ENCODE measurements at regions of chr13 and their contacts with region 1.

Region 1: DNA sequence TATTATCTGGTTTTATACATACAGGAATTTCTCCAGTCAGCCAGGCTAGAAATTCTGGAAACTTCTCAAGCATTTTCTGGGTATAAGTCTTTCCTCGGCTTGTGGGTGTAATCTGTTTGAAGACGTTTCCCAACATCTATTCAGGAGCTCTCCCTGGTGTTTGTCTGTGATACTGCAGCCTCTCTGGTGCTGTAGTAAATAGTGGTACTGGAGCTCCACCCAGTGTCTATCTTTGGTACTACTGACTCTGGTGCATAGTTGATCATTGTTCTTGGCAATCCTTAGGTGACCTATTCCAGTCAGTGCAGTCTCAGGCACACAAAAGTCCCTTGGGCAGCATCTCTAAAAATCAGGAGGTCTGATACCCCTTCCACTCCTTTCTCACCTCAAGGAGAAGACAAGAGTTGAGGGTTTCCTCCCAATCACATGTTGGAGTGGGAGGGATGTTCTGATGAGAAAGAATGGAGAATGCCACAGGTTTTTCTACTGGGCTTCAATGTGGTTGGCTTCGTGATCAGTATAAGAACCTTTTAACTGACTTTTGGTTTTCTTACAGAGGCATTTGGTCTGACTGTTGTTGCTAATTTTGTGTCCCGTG is 115.5 kb downstream of the CYSLTR2 start:
- DNase-seq: peak; percentile 89
- ATAC-seq: peak; percentile 96
- H3K4me3 Mint-ChIP-seq: no peak overlapping the region
- H3K27ac Mint-ChIP-seq: no peak overlapping the region
- H3K4me1 Mint-ChIP-seq: peaks cover 19% of the 10 kb centered on the region
- H3K27me3 Mint-ChIP-seq: peaks cover 22% of the 10 kb centered on the region

Region 2: DNA sequence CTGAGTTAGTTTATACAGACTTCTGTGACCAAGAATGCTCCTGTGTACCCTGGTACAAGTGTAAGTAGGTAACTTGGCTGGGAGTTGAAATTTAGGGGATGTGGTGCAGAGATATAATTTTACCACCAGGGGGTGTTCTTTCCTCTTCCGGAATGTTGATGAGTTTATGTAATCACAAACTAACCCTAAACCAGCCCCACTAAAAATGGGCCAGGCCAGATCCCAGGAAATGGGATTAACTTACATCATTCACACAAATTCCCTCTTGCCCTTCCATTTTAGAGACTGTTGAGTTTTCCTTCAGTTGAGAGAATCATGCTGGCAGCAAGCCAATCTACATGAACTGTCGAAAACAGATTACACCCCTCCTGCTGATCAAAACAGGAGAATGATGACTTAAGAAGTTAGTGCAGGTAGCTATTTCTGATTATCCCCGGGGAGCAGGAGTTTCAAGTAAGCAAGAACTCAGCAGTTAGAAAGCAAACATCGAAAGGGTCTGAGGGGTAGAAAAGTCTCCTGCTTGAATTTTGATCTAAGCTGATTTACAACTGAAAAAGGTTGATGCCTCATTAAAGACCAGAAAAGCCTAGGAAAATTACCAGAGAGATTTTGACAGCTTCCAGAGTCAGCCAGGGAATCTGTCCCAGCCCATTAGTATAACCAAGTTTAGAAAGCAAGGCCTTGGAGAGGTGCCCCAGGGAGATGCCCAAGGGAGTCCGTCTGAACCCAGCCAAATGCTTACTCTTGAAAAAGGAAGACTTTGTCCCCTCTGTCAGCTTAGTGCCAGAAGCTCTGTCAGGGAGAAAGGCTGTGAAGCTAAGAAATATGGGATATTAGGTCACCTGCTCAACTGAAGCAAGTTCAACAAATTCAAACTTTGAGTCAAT is 642.0 kb before region 1 on chr13:
- CTCF ChIA-PET with region 1: interaction called, 3 read pairs
- POLR2A ChIA-PET with region 1: no interaction called
- intact Hi-C with region 1: loop called (anchors 1 kb)
- DNase-seq: peak; percentile 33
- ATAC-seq: peak; percentile 77
- H3K4me3 Mint-ChIP-seq: no peak overlapping the region
- H3K27ac Mint-ChIP-seq: no peak overlapping the region
- H3K4me1 Mint-ChIP-seq: peaks cover 20% of the 10 kb centered on the region
- H3K27me3 Mint-ChIP-seq: no peaks in the 10 kb centered on the region

Region 3: GRCh38 chr13:48505597-48506091 is 263.6 kb before region 1 on chr13:
- CTCF ChIA-PET with region 1: interaction called, 3 read pairs
- POLR2A ChIA-PET with region 1: no interaction called
- intact Hi-C with region 1: loop called in 1 of 2 experiments (anchors 5 kb)
- DNase-seq: peak; percentile 64
- ATAC-seq: peak; percentile 71
- H3K4me3 Mint-ChIP-seq: peak overlapping the region; percentile 22
- H3K27ac Mint-ChIP-seq: peak overlapping the region; percentile 85
- H3K4me1 Mint-ChIP-seq: peaks cover 57% of the 10 kb centered on the region
- H3K27me3 Mint-ChIP-seq: no peaks in the 10 kb centered on the region

Region 4: GRCh38 chr13:48585456-48585840 is 183.8 kb before region 1 on chr13:
- CTCF ChIA-PET with region 1: interaction called, 28 read pairs
- POLR2A ChIA-PET with region 1: no interaction called
- intact Hi-C with region 1: no loop called
- DNase-seq: no peak
- ATAC-seq: no peak
- H3K4me3 Mint-ChIP-seq: no peak overlapping the region
- H3K27ac Mint-ChIP-seq: no peak overlapping the region
- H3K4me1 Mint-ChIP-seq: peaks cover 12% of the 10 kb centered on the region
- H3K27me3 Mint-ChIP-seq: peaks cover 10% of the 10 kb centered on the region

Region 5: DNA sequence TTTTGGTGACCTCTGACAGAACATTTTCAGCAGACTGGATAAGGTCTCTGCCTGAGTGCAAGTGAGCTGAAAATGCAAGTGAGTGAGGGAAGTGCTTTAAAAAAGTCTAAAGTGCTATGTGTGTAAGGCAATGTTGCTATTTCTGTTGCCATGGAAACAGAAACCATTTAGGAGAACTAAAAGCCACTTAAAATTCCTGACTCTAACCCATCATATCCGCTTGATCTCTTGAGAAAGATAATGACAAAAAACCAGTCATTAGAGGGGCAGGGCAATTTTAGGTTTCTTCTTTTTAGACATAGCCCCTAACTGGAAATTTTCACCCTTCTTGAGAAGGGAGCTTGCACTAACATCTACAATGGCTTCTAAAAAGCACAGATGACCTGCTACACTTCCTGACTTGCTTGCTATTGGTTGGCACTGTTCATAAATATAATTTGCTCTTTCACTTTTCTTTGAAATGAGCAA is 115.7 kb before region 1 on chr13 and contains the start of gene CYSLTR2:
- CTCF ChIA-PET with region 1: interaction called, 4 read pairs
- POLR2A ChIA-PET with region 1: no interaction called
- intact Hi-C with region 1: loop called in 1 of 2 experiments (anchors 5 kb)
- DNase-seq: no peak
- ATAC-seq: peak; percentile 88
- H3K4me3 Mint-ChIP-seq: peak within 1 kb of the TSS; percentile 60
- H3K27ac Mint-ChIP-seq: peak within 1 kb of the TSS; percentile 90
- H3K4me1 Mint-ChIP-seq: peaks cover 44% of the 10 kb centered on the region
- H3K27me3 Mint-ChIP-seq: no peaks in the 10 kb centered on the region
- total RNA-seq, gene CYSLTR2: 2.2 to 2.5 TPM

Region 6: DNA sequence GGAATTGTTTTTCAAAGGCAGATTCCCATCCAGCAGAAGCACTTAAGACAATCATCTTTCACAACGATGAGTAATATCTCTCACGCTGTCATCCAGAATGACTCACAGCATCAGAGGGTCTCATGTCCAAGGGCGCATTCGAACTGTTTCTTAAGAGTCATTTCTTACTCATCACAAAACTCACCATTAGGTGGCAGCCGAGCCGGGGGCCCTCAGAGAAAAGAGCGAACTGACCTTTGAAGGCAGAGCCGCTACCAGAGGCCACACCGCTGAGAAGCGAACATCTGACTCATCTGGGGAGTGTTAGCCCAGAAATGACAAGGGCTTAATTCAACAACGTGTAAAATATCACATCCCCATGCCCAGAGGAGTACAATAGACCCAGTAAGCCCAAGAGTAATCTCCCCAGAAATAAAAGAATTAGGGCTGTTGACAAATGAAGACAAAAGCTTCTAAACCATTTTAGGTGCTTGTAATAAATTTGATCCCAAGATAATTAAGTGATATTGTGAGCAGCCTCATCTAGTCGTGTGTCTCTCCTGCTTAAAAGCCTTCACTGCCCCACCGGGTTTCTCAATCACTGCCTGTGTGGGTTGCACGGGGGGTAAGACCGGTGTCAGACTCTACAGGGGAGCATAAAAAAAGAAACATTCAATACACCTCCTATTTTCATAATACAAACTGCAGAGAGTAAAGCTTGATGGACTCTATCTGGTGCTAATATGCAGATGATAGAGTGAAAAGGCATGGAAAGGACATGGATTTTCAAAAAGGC is 19.3 kb before region 1 on chr13:
- CTCF ChIA-PET with region 1: interaction called, 10 read pairs
- POLR2A ChIA-PET with region 1: no interaction called
- intact Hi-C with region 1: loop called in 1 of 2 experiments (anchors 1 kb)
- DNase-seq: peak; percentile 88
- ATAC-seq: peak; percentile 97
- H3K4me3 Mint-ChIP-seq: no peak overlapping the region
- H3K27ac Mint-ChIP-seq: peak overlapping the region; percentile 74
- H3K4me1 Mint-ChIP-seq: peaks cover 19% of the 10 kb centered on the region
- H3K27me3 Mint-ChIP-seq: no peaks in the 10 kb centered on the region